ENCODE measurements at regions of chrX and their contacts with region 1.

Region 1: GRCh38 chrX:74015379-74016019 is 288.5 kb upstream of the ZCCHC13 start:
- DNase-seq: peak; percentile 86
- H3K4me3 Mint-ChIP-seq: no peak overlapping the region
- H3K27ac Mint-ChIP-seq: no peak overlapping the region
- H3K4me1 Mint-ChIP-seq: no peaks in the 10 kb centered on the region
- H3K27me3 Mint-ChIP-seq: no peaks in the 10 kb centered on the region
- CTCF ChIP-seq: peak; percentile 78

Region 2: GRCh38 chrX:73863268-73863667 is 152.2 kb before region 1 on chrX:
- CTCF ChIA-PET with region 1: interaction called, 17 read pairs
- POLR2A ChIA-PET with region 1: interaction called, 3 read pairs
- intact Hi-C with region 1: no loop called
- DNase-seq: no peak
- H3K4me3 Mint-ChIP-seq: no peak overlapping the region
- H3K27ac Mint-ChIP-seq: no peak overlapping the region
- H3K4me1 Mint-ChIP-seq: no peaks in the 10 kb centered on the region
- H3K27me3 Mint-ChIP-seq: peaks cover 28% of the 10 kb centered on the region
- CTCF ChIP-seq: no peak

Region 3: GRCh38 chrX:74133156-74133796 is 117.8 kb after region 1 on chrX:
- CTCF ChIA-PET with region 1: interaction called, 15 read pairs
- POLR2A ChIA-PET with region 1: no interaction called
- intact Hi-C with region 1: loop called (anchors 1 kb)
- DNase-seq: peak; percentile 73
- H3K4me3 Mint-ChIP-seq: no peak overlapping the region
- H3K27ac Mint-ChIP-seq: no peak overlapping the region
- H3K4me1 Mint-ChIP-seq: peaks cover 5% of the 10 kb centered on the region
- H3K27me3 Mint-ChIP-seq: peaks cover 52% of the 10 kb centered on the region
- CTCF ChIP-seq: peak; percentile 68